Dorsolateral prefrontal cortex (tissue), 120 donors: ENCODE measurements at regions of chr2 and their contacts with region 1.

Region 1: GRCh38 chr2:54455563-54456361 is at the start of gene SPTBN1:
- DNase-seq: peak; percentile 86 to 96 (median 93)
- H3K4me3 ChIP-seq: peak within 1 kb of the TSS; percentile 65 to 97 (median 82)
- H3K27ac ChIP-seq: peak within 1 kb of the TSS; percentile 94 to 100 (median 99)
- H3K27me3 ChIP-seq: no peaks in the 10 kb centered on the region
- CTCF ChIP-seq: peak in 23 of 56 donors; percentile 1 to 44 (median 16)
- total RNA-seq, gene SPTBN1: 567 to 884 (median 665) TPM

Region 2: GRCh38 chr2:52862801-52863200 is 1593.0 kb before region 1 on chr2:
- intact Hi-C with region 1: no loop called
- DNase-seq: no peak
- H3K4me3 ChIP-seq: no peak overlapping the region
- H3K27ac ChIP-seq: no peak overlapping the region
- H3K27me3 ChIP-seq: no peaks in the 10 kb centered on the region
- CTCF ChIP-seq: no peak

Region 3: DNA sequence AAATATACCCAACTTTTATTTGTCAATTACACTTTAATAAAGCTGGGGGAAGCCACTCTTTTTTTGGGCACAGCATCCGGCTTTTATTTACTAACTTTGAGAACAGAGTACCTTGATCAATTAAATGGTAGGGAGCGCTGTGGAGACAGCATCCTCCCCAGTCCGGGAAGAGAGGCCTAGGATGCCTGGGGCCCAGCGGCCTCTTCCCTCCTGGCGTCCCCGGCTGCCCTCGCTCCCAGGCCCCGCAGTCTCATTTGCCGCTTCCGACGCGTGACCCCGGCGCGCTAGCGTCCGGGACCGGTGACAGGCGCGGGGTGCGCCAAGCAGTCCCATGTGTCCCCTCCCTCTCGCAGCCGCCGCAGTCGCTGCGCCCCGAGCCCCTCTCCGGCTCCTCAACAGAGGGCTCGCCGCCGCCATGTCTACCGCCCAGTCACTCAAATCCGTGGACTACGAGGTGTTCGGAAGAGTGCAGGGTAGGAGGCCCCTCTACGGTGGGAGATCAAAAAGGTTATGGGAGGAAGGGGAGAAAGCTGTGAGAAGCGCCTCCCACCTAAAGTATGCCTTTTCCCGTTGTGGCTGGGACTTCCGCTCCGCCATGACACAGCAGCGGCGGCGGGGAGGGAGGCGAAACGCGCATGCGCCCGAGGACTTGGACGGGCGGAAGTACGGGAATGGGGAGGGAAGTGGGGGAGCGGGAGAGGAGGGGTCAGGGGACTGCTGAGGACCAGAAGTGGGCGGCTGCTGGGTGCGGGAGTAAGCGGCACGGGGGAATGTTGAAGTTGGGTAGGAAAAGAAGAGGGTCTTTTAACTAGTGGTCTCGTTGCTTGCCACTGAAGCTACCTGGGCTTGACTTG is 340.3 kb before region 1 on chr2 and contains the start of gene ACYP2:
- intact Hi-C with region 1: loop called in 1 of 2 experiments (anchors 5 kb)
- DNase-seq: peak; percentile 86 to 95 (median 92)
- H3K4me3 ChIP-seq: peak within 1 kb of the TSS; percentile 59 to 93 (median 80)
- H3K27ac ChIP-seq: peak within 1 kb of the TSS; percentile 94 to 100 (median 100)
- H3K27me3 ChIP-seq: no peaks in the 10 kb centered on the region
- CTCF ChIP-seq: peak in 42 of 56 donors; percentile 7 to 53 (median 32)
- total RNA-seq, gene ACYP2: 51.6 to 88.2 (median 68.5) TPM

Region 4: GRCh38 chr2:54206596-54206995 is 249.2 kb before region 1 on chr2:
- intact Hi-C with region 1: loop called in 1 of 2 experiments (anchors 5 kb)
- DNase-seq: no peak
- H3K4me3 ChIP-seq: peak overlapping the region in 15 of 59 donors; percentile 2 to 41 (median 22)
- H3K27ac ChIP-seq: peak overlapping the region in 12 of 59 donors; percentile 4 to 48 (median 24)
- H3K27me3 ChIP-seq: no peaks in the 10 kb centered on the region
- CTCF ChIP-seq: peak; percentile 57 to 91 (median 78)

Region 5: DNA sequence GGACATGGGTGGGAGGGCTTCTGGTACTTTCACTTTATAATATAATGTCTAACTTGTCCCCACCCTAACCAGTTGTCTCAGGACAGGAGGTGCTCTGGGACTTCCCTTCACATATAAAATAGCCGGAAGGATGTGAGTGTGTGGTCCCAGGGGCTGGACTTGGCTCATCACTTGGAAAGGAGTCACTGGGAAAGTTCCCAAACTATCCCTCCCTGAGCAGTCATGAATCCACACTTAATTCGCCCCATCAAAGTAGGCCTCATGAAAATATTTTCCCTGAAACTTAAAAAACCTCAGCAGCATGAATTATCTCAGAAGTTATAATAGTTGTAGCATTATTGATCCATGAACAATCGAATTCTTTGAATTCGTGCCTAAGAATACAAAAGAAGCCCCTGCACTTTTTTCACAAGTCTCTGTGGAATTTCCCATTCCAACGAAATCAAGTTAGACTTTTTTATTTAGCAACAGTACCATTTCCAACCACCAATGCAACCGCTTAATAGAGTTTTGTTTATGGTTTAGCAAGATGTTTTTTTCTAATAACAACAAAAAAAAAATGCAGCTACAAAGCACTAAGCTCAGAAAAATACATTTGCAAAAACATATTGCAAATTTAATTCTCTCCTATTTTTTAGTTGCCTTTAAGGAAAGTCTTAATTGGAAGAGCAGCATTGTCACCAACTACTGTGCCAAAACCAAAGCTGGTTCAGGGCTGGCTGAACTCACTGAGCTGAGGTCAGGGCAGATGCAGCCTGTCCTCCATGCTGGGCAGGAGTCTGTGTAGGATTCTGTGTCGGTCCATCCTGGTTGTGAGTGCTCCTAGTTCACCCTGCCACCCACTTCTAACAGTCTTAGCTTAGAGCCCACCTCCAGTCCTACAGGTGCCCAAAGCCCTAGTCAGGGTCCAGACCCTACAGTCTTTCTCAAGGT is 68.4 kb before region 1 on chr2:
- intact Hi-C with region 1: loop called (anchors 5 to 10 kb)
- DNase-seq: no peak
- H3K4me3 ChIP-seq: no peak overlapping the region
- H3K27ac ChIP-seq: peak overlapping the region in 48 of 59 donors; percentile 2 to 98 (median 72)
- H3K27me3 ChIP-seq: no peaks in the 10 kb centered on the region
- CTCF ChIP-seq: peak in 16 of 56 donors; percentile 0 to 39 (median 19)

Region 6: GRCh38 chr2:54497763-54498680 is 42.3 kb after region 1 on chr2:
- intact Hi-C with region 1: loop called (anchors 5 to 10 kb)
- DNase-seq: peak in 3 of 10 donors; percentile 21 to 46 (median 43)
- H3K4me3 ChIP-seq: no peak overlapping the region
- H3K27ac ChIP-seq: peak overlapping the region in 25 of 59 donors; percentile 0 to 66 (median 30)
- H3K27me3 ChIP-seq: no peaks in the 10 kb centered on the region
- CTCF ChIP-seq: peak in 52 of 56 donors; percentile 27 to 65 (median 47)

Region 7: GRCh38 chr2:54503192-54503591 is 47.4 kb after region 1 on chr2:
- intact Hi-C with region 1: loop called (anchors 5 to 10 kb)
- DNase-seq: peak in 1 of 10 donors; percentile 56
- H3K4me3 ChIP-seq: no peak overlapping the region
- H3K27ac ChIP-seq: peak overlapping the region in 21 of 59 donors; percentile 0 to 48 (median 32)
- H3K27me3 ChIP-seq: no peaks in the 10 kb centered on the region
- CTCF ChIP-seq: peak; percentile 23 to 73 (median 58)

Region 8: GRCh38 chr2:54520687-54521086 is 64.9 kb after region 1 on chr2:
- intact Hi-C with region 1: no loop called
- DNase-seq: no peak
- H3K4me3 ChIP-seq: no peak overlapping the region
- H3K27ac ChIP-seq: peak overlapping the region in 28 of 59 donors; percentile 2 to 74 (median 44)
- H3K27me3 ChIP-seq: no peaks in the 10 kb centered on the region
- CTCF ChIP-seq: no peak

Region 9: GRCh38 chr2:54673501-54673998 is 217.8 kb after region 1 on chr2:
- intact Hi-C with region 1: no loop called
- DNase-seq: peak in 1 of 10 donors; percentile 50
- H3K4me3 ChIP-seq: peak overlapping the region in 6 of 59 donors; percentile 4 to 28 (median 14)
- H3K27ac ChIP-seq: peak overlapping the region; percentile 24 to 96 (median 82)
- H3K27me3 ChIP-seq: no peaks in the 10 kb centered on the region
- CTCF ChIP-seq: no peak

Region 10: DNA sequence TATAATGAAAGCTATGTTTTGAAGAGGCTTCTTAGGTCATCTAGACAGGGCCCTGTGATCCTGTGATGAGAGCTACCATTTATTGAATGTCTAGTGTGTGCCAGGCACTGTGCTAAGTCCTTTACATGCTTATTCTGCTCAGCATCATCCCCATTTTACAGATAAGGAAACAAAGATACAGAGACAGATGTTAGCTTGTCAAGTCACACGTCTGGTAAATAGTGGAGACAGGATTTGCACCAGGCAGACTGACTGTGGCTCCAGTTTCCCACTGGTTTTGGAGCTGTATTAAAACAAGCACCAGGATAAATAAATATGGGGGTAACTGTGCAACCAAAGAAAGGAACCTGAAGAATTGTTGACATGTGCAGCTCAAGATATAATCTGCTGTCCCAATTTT is 248.5 kb after region 1 on chr2:
- intact Hi-C with region 1: no loop called
- DNase-seq: no peak
- H3K4me3 ChIP-seq: no peak overlapping the region
- H3K27ac ChIP-seq: peak overlapping the region in 31 of 59 donors; percentile 2 to 74 (median 33)
- H3K27me3 ChIP-seq: no peaks in the 10 kb centered on the region
- CTCF ChIP-seq: no peak